Ovary (tissue), 10 donors: ENCODE measurements at regions of chr20 and their contacts with region 1.

Region 1: GRCh38 chr20:18287915-18288748 is at the start of gene ZNF133:
- DNase-seq: peak; percentile 95 to 98 (median 96)
- H3K4me3 ChIP-seq: peak within 1 kb of the TSS; percentile 72
- H3K27ac ChIP-seq: peak within 1 kb of the TSS; percentile 66 to 95
- H3K4me1 ChIP-seq: peaks cover 10% of the 10 kb centered on the region
- H3K27me3 ChIP-seq: no peaks in the 10 kb centered on the region
- CTCF ChIP-seq: peak in 1 of 3 donors; percentile 8
- EP300 ChIP-seq: no peak
- POLR2A ChIP-seq: peak; percentile 80
- total RNA-seq, gene ZNF133: 13.4 to 20.0 (median 15.1) TPM

Region 2: GRCh38 chr20:18314786-18315406 is 26.8 kb after region 1 on chr20:
- intact Hi-C with region 1: no loop called
- DNase-seq: no peak
- H3K4me3 ChIP-seq: no peak overlapping the region
- H3K27ac ChIP-seq: no peak overlapping the region
- H3K4me1 ChIP-seq: no peaks in the 10 kb centered on the region
- H3K27me3 ChIP-seq: no peaks in the 10 kb centered on the region
- CTCF ChIP-seq: no peak
- EP300 ChIP-seq: no peak
- POLR2A ChIP-seq: no peak

Region 3: DNA sequence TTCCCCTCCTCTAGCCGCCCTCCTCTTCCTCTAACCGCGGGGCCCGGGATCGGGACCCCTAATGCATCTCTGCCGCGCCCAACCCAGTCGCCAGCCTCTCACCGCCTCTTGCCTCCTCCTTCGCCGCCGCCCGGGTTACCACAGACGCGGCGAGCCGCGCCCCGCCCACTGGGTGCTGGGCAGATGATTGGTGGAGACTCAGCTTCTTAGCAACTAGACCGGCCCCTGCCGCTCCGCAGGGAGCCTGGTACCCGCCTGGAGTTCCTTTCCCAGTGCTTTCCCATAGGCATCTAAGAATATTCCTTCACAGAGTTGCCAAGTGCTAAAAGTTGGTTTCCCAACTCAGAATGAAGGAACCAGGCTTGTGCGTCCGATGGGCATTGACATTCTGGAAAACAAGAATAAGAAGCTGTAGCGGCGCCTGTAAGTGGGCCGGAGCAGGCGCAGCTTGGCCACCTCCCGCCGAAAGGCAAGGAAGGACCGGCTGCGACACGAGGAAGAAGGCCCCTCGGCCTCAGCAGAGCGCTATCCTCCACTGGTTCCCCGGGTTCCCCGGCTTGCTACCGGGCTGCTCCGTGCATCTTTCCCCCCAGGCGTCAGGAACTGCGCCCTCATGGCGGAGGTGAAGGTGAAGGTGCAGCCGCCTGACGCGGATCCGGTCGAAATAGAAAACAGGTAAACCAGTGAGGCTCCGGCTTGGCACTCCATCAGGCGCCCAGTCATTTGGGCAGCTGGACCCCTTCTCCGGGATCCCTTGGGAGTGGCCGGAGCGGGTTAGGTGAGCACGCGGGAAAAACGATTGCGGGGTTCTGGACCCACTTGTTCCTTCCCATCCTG is 179.0 kb after region 1 on chr20 and contains the starts of genes DZANK1 and POLR3F:
- intact Hi-C with region 1: loop called in 1 of 4 experiments (anchors 10 kb)
- DNase-seq: peak; percentile 93 to 96 (median 93)
- H3K4me3 ChIP-seq: peak within 1 kb of the TSS; percentile 75
- H3K27ac ChIP-seq: peak within 1 kb of the TSS; percentile 57 to 84
- H3K4me1 ChIP-seq: peaks cover 3% of the 10 kb centered on the region
- H3K27me3 ChIP-seq: no peaks in the 10 kb centered on the region
- CTCF ChIP-seq: no peak
- EP300 ChIP-seq: no peak
- POLR2A ChIP-seq: peak; percentile 28
- total RNA-seq, gene DZANK1: 3.1 to 6.5 (median 3.9) TPM
- total RNA-seq, gene POLR3F: 6.5 to 13.2 (median 9.0) TPM